Naive thymus-derived CD4-positive, alpha-beta T cell (primary cell): ENCODE measurements at regions of chr12 and their contacts with region 1.

Region 1: GRCh38 chr12:121579981-121580868 is 598 bp downstream of the KDM2B start:
- DNase-seq: peak; percentile 61 to 79 (median 74)
- ATAC-seq: peak; percentile 76
- H3K4me3 ChIP-seq: peak overlapping the region; percentile 75
- H3K4me3 Mint-ChIP-seq: peak overlapping the region; percentile 92 to 100 (median 98)
- H3K27ac ChIP-seq: peak overlapping the region; percentile 91
- H3K27ac Mint-ChIP-seq: peak overlapping the region; percentile 92 to 99 (median 99)
- H3K4me1 ChIP-seq: peaks cover 25 to 28% of the 10 kb centered on the region in 2 donors
- H3K4me1 Mint-ChIP-seq: peaks cover 24 to 58% (median 49%) of the 10 kb centered on the region in 7 donors
- H3K27me3 ChIP-seq: no peaks in the 10 kb centered on the region
- H3K27me3 Mint-ChIP-seq: no peaks in the 10 kb centered on the region

Region 2: GRCh38 chr12:121314431-121314830 is 265.8 kb before region 1 on chr12:
- CTCF ChIA-PET with region 1: no interaction called
- POLR2A ChIA-PET with region 1: no interaction called
- intact Hi-C with region 1: no loop called
- DNase-seq: peak in 1 of 9 donors; percentile 4
- ATAC-seq: no peak
- H3K4me3 ChIP-seq: no peak overlapping the region
- H3K4me3 Mint-ChIP-seq: no peak overlapping the region
- H3K27ac ChIP-seq: no peak overlapping the region
- H3K27ac Mint-ChIP-seq: peak overlapping the region in 7 of 9 donors; percentile 11 to 64 (median 33)
- H3K4me1 ChIP-seq: no peaks in the 10 kb centered on the region
- H3K4me1 Mint-ChIP-seq: peaks cover 11 to 41% (median 28%) of the 10 kb centered on the region in 7 donors
- H3K27me3 ChIP-seq: no peaks in the 10 kb centered on the region
- H3K27me3 Mint-ChIP-seq: no peaks in the 10 kb centered on the region

Region 3: DNA sequence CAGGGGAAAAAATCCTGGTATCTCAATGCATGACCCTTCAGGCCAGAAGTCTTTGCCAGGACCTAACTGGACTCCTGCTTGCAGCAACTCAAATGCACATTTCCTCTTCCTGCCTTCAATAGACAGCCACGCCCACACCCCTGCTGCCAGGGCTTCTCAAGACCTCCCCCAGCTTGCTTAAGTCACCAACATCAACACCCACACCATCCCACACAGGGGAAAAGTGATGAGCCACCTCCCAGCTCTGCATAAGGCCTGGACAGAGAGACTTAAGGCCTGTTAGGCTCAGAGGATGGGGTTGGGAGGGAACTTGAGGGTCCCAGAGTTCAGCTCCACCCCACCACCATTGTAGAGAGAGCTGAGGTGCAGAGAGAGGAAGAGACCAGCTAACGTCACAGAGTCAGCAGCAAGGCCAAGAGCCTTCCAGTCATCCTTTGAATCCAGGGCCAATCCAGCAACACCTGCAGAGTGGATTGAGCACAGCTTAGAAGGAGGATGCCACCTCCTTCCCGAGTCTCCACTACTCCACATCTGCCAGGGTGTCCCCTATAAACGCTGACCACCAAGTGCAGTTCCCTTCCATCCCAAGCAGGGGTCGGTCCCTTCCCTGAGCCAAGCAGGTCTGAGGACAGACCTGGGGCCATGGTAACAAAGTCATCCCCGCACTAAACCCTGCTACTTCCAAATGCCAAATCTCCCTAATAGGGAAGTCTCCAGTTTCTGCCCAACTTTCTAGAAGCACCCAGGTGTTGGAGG is 49.4 kb before region 1 on chr12:
- CTCF ChIA-PET with region 1: no interaction called
- POLR2A ChIA-PET with region 1: interaction called, 5 read pairs
- intact Hi-C with region 1: loop called in 1 of 2 experiments (anchors 2 kb)
- DNase-seq: peak; percentile 33 to 77 (median 68)
- ATAC-seq: peak; percentile 78
- H3K4me3 ChIP-seq: peak overlapping the region; percentile 12
- H3K4me3 Mint-ChIP-seq: peak overlapping the region; percentile 50 to 78 (median 66)
- H3K27ac ChIP-seq: peak overlapping the region; percentile 67
- H3K27ac Mint-ChIP-seq: peak overlapping the region; percentile 71 to 94 (median 87)
- H3K4me1 ChIP-seq: peaks cover 26 to 35% of the 10 kb centered on the region in 2 donors
- H3K4me1 Mint-ChIP-seq: peaks cover 25 to 61% (median 41%) of the 10 kb centered on the region in 7 donors
- H3K27me3 ChIP-seq: no peaks in the 10 kb centered on the region
- H3K27me3 Mint-ChIP-seq: no peaks in the 10 kb centered on the region

Region 4: DNA sequence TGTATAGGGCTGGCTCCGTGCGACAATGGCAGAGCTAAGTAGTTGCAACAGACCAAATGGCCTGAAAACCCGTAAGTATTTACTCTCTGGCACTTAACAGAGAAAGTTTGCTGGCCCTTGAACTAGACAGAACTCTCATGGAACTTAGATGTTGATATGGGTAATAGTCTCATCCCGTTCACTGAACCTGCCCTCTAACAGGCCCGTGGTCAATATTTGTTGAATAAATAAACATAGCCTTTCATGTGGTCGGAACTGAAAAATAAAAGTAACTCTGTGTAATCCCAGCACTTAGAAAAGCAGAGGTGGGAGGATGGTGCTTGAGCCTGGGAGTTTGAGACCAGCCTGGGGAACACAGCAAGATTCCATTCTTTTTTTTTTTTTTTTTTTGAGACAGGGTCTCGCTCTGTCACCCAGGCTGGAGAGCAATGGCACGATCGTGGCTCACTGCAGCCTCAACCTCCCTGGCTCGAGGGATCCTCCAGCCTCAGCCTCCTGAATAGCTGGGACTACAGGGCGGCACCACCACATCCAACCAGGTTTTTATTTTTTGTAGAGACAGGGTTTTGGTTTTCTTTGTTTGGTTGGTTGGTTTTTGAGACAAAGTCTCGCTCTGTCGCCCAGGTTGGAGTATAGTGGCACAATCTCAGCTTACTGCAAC is 29.1 kb before region 1 on chr12:
- CTCF ChIA-PET with region 1: interaction called, 23 read pairs
- POLR2A ChIA-PET with region 1: interaction called, 27 read pairs
- intact Hi-C with region 1: loop called in 1 of 2 experiments (anchors 2 kb)
- DNase-seq: no peak
- ATAC-seq: no peak
- H3K4me3 ChIP-seq: no peak overlapping the region
- H3K4me3 Mint-ChIP-seq: no peak overlapping the region
- H3K27ac ChIP-seq: no peak overlapping the region
- H3K27ac Mint-ChIP-seq: no peak overlapping the region
- H3K4me1 ChIP-seq: peaks cover 0 to 12% of the 10 kb centered on the region in 2 donors
- H3K4me1 Mint-ChIP-seq: peaks cover 0 to 7% (median 3%) of the 10 kb centered on the region in 7 donors
- H3K27me3 ChIP-seq: no peaks in the 10 kb centered on the region
- H3K27me3 Mint-ChIP-seq: no peaks in the 10 kb centered on the region

Region 5: DNA sequence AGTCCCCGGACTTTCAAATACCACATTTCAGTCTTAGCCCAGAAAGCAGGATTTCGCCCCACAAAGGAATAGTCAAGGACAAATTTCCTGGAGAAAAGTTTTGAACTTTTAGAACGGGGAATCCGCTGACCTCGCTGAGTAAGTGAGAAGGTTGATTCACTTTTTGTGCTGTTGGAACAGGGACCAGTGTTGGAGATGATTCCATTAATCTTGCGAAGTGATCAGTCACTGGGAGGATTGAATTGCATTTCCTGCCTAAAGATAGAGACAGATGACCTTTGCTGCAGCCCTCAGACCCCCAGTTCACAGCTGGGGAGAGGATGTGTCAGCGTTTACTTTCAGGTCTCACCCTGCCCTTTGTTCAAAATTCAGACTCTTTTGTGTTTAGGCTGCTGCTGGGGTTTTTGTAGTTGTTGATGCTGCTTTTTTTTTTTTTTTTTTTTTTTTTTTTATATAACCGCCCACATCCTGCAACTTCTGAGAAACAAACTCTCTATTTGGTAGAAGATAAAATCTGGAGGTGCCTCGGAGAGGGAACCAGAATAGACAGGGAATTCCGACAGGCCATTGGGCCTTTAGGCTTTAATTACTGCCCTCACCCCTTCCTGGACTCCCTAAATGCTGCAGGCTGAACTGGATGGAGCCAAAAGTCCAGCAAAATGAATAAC is 10.4 kb after region 1 on chr12:
- CTCF ChIA-PET with region 1: interaction called, 11 read pairs
- POLR2A ChIA-PET with region 1: interaction called, 127 read pairs
- intact Hi-C with region 1: loop called (anchors 1 kb)
- DNase-seq: peak; percentile 38 to 88 (median 83)
- ATAC-seq: peak; percentile 81
- H3K4me3 ChIP-seq: peak overlapping the region; percentile 76
- H3K4me3 Mint-ChIP-seq: peak overlapping the region; percentile 59 to 94 (median 90)
- H3K27ac ChIP-seq: peak overlapping the region; percentile 90
- H3K27ac Mint-ChIP-seq: peak overlapping the region; percentile 97 to 100 (median 99)
- H3K4me1 ChIP-seq: peaks cover 24 to 26% of the 10 kb centered on the region in 2 donors
- H3K4me1 Mint-ChIP-seq: peaks cover 16 to 53% (median 38%) of the 10 kb centered on the region in 7 donors
- H3K27me3 ChIP-seq: no peaks in the 10 kb centered on the region
- H3K27me3 Mint-ChIP-seq: peaks cover 0 to 3% (median 0%) of the 10 kb centered on the region in 5 donors

Region 6: GRCh38 chr12:121802846-121803630 is 222.8 kb after region 1 on chr12:
- CTCF ChIA-PET with region 1: no interaction called
- POLR2A ChIA-PET with region 1: interaction called, 21 read pairs
- intact Hi-C with region 1: loop called (anchors 2 to 5 kb)
- DNase-seq: peak; percentile 84 to 94 (median 92)
- ATAC-seq: peak; percentile 65
- H3K4me3 ChIP-seq: peak overlapping the region; percentile 94
- H3K4me3 Mint-ChIP-seq: peak overlapping the region; percentile 89 to 99 (median 96)
- H3K27ac ChIP-seq: peak overlapping the region; percentile 96
- H3K27ac Mint-ChIP-seq: peak overlapping the region; percentile 98 to 100 (median 99)
- H3K4me1 ChIP-seq: peaks cover 21 to 28% of the 10 kb centered on the region in 2 donors
- H3K4me1 Mint-ChIP-seq: peaks cover 25 to 37% (median 29%) of the 10 kb centered on the region in 7 donors
- H3K27me3 ChIP-seq: no peaks in the 10 kb centered on the region
- H3K27me3 Mint-ChIP-seq: no peaks in the 10 kb centered on the region